PC-9 (cell line): ENCODE measurements at regions of chr1 and their contacts with region 1.

Region 1: DNA sequence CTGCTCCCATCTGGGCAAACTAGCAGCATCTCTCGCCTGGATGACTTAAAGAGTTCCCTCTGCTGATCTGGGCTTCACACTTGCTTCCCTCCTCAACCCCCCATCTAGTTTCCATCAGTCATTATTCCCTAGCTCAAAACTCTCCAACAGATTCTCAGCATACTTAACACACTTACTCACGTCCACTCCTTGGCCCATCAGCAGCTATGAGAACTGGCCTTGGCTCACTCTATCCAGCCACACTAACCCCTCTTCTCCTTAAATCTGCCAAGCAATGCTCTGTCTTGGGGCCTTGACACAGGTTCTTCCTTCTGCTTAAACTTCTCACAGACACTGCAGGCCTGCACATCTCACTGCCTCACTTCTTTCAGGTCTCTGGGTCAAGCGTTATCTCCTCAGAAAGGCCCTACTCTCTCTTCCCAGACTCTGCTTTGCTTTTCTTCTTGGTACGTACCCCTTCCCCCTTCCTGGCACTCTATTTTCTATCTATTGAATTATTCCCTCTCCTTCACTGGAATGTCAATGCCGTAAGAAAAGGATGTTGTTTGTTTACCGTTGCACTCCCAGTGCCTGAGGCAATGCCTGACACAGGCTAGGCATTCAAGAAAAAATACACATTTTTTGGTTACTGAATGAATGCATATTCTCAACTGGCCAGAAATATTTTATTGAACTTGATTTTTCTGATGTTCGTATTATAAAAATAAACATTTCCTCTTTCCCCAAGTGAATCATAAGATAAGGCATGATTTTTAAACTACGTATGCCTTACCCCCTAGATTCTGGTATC is 41.4 kb downstream of the GNG12 start:
- DNase-seq: peak; percentile 60 to 89
- H3K4me3 ChIP-seq: no peak overlapping the region; the same call in 1 of the 2 replicates
- H3K27ac ChIP-seq: peak overlapping the region; percentile 84
- H3K4me1 ChIP-seq: peaks cover 45% of the 10 kb centered on the region
- H3K27me3 ChIP-seq: no peaks in the 10 kb centered on the region
- CTCF ChIP-seq: no peak

Region 2: GRCh38 chr1:67840449-67840848 is 48.6 kb after region 1 on chr1:
- CTCF ChIA-PET with region 1: no interaction called
- POLR2A ChIA-PET with region 1: interaction called, 3 read pairs
- intact Hi-C with region 1: loop called (anchors 2 kb)
- DNase-seq: peak; percentile 39 to 75
- H3K4me3 ChIP-seq: no peak overlapping the region
- H3K27ac ChIP-seq: no peak overlapping the region
- H3K4me1 ChIP-seq: peaks cover 22% of the 10 kb centered on the region
- H3K27me3 ChIP-seq: no peaks in the 10 kb centered on the region
- CTCF ChIP-seq: no peak